ENCODE measurements at regions of chr9 and their contacts with region 1.

Region 1: DNA sequence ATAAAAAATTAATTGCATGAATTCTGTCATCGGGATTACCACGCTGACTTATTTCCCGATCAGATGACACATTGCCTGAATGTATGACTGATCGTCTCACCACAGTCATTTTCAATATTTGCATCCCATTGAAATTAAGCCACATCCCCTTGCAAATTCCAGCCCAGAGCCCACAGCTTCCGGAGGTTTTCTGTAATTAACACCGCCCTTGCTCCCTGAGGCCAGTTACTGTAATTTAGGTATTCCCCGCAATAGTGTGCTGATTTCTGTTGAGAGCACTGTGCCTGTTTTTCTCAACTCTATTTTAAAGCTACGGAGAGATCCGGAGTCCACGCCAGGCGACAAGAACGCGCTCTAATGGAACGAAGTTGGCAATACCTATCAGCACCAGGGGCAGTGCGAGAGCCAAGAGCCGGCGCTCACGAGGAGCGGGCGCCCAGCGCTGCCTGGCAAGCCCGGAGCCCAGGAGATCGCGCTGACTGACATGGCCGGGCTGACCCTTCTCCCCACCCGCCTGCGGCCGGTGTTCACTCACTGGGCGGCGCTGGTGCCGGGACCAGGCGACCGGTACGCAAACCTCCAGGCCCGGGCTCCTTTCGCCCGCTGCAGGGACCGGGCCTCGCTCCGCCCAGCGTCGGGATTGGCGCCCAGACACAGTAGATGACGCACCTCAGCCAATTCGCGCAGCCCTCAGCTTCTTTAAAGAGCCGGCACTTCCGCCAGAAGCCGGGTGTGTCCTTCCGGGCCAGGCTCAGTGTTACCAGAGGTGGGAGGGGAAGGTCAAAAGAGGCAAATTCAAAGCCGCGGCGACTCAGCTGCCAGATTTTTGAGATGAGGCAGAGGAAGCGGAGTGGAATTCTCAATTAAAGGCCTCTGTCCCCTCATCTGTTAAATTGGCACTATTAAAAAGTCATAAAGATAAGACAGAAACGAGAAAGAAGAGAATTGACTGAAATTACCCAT is at the start of gene PLGRKT:
- DNase-seq: peak; percentile 82 to 94
- ATAC-seq: peak; percentile 97 to 99
- H3K4me3 ChIP-seq: peak within 1 kb of the TSS; percentile 73
- H3K27ac ChIP-seq: peak within 1 kb of the TSS; percentile 87 to 91
- H3K4me1 ChIP-seq: peaks cover 18% of the 10 kb centered on the region
- CTCF ChIP-seq: no peak
- EP300 ChIP-seq: no peak
- POLR2A ChIP-seq: peak; percentile 94
- RAD21 ChIP-seq: no peak
- polyA plus RNA-seq, gene PLGRKT: 22.4 and 37.7 TPM in 2 replicates

Region 2: DNA sequence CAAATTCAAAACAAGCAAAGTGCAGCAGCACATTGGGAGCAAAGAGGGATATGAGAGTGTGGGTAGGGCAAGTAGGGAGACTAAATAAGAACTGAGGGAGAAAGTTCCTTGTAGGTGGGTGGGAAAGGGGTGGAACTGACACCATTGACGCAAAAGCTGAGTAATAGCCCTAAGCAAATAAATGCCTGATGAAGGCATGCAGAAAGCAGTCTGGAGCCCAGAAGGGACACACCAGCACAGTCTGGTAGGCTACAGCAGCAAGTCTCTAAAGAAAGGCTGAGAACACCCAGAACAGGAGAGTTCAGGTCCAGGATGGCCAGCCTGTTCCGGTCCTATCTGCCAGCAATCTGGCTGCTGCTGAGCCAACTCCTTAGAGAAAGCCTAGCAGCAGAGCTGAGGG is 206.3 kb before region 1 on chr9 and contains the start of gene INSL4:
- CTCF ChIA-PET with region 1: no interaction called
- POLR2A ChIA-PET with region 1: interaction called, 13 read pairs
- DNase-seq: peak; percentile 58 to 93
- ATAC-seq: peak; percentile 97 to 98
- H3K4me3 ChIP-seq: peak within 1 kb of the TSS; percentile 37
- H3K27ac ChIP-seq: peak within 1 kb of the TSS; percentile 78 to 89
- H3K4me1 ChIP-seq: peaks cover 22% of the 10 kb centered on the region
- CTCF ChIP-seq: no peak
- EP300 ChIP-seq: peak in 1 of 2 experiments; percentile 48; a peak in 2 of 5 replicates
- POLR2A ChIP-seq: peak; percentile 76
- RAD21 ChIP-seq: 0 out of 5 replicates have a peak, but pooled peaks of 1 of the 2 experiments have one; percentile 8
- polyA plus RNA-seq, gene INSL4: 54.0 and 77.5 TPM in 2 replicates

Region 3: GRCh38 chr9:5425006-5425628 is 12.4 kb before region 1 on chr9:
- CTCF ChIA-PET with region 1: interaction called, 15 read pairs
- POLR2A ChIA-PET with region 1: interaction called, 4 read pairs
- DNase-seq: peak; percentile 41 to 59
- ATAC-seq: peak; percentile 59 to 81; a peak in 5 of 6 replicates
- H3K4me3 ChIP-seq: no peak overlapping the region
- H3K27ac ChIP-seq: no peak overlapping the region
- H3K4me1 ChIP-seq: no peaks in the 10 kb centered on the region
- CTCF ChIP-seq: peak; percentile 75
- EP300 ChIP-seq: no peak
- POLR2A ChIP-seq: no peak
- RAD21 ChIP-seq: peak; percentile 81

Region 4: GRCh38 chr9:5470122-5470521 is 32.6 kb after region 1 on chr9:
- CTCF ChIA-PET with region 1: no interaction called
- POLR2A ChIA-PET with region 1: no interaction called
- DNase-seq: no peak
- ATAC-seq: peak in 1 of 2 experiments; percentile 41; a peak in 2 of 6 replicates
- H3K4me3 ChIP-seq: no peak overlapping the region
- H3K27ac ChIP-seq: no peak overlapping the region
- H3K4me1 ChIP-seq: no peaks in the 10 kb centered on the region
- CTCF ChIP-seq: no peak
- EP300 ChIP-seq: no peak
- POLR2A ChIP-seq: no peak
- RAD21 ChIP-seq: no peak